ENCODE measurements at regions of chr6 and their contacts with region 1.

Region 1: DNA sequence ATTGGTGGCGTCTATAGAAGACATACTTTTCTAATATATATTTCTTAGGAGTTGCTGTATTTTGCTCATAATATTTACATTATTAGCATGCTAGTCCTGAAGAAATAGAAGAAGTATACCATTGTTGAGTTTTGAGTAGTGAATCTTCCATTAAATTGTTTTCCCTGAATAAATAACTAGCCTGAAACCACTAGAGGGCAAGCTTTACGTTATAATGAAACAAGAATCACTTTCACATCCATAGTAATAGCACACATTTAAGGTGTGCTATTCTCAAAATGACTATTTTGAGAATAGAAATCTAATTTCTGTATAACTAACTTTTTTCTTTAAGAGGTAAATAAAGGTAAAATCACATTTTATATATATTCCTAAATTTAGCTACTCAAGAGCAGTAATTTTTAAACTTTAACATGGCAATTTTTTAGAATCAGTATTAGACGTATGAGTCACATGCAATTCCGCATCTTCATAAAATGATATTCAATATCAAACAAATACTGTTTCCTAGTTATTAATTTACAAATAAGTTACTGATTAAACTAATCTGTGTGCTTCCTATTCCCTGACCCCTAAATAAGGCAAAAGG is 213.2 kb upstream of the MANEA start:
- DNase-seq: no peak
- H3K4me3 Mint-ChIP-seq: no peak overlapping the region
- H3K27ac Mint-ChIP-seq: no peak overlapping the region
- H3K4me1 Mint-ChIP-seq: no peaks in the 10 kb centered on the region
- H3K27me3 Mint-ChIP-seq: no peaks in the 10 kb centered on the region

Region 2: GRCh38 chr6:95866732-95867131 is 502.6 kb after region 1 on chr6:
- CTCF ChIA-PET with region 1: no interaction called
- intact Hi-C with region 1: loop called (anchors 1 kb)
- DNase-seq: peak; percentile 8
- H3K4me3 Mint-ChIP-seq: no peak overlapping the region
- H3K27ac Mint-ChIP-seq: no peak overlapping the region
- H3K4me1 Mint-ChIP-seq: no peaks in the 10 kb centered on the region
- H3K27me3 Mint-ChIP-seq: no peaks in the 10 kb centered on the region

Region 3: GRCh38 chr6:96917098-96917497 is 1553.0 kb after region 1 on chr6:
- CTCF ChIA-PET with region 1: no interaction called
- intact Hi-C with region 1: no loop called
- DNase-seq: no peak
- H3K4me3 Mint-ChIP-seq: no peak overlapping the region
- H3K27ac Mint-ChIP-seq: no peak overlapping the region
- H3K4me1 Mint-ChIP-seq: peaks cover 11% of the 10 kb centered on the region
- H3K27me3 Mint-ChIP-seq: peaks cover under 1% of the 10 kb centered on the region

Measured in activated naive CD4-positive, alpha-beta T cell treated with anti-CD3 and anti-CD28 coated beads for 36 hours (primary cell).